Activated CD4-positive, alpha-beta T cell treated with anti-CD3 and anti-CD28 coated beads for 36 hours (primary cell): ENCODE measurements at regions of chr11 and their contacts with region 1.

Region 1: GRCh38 chr11:68053981-68054812 is 15.4 kb downstream of the TCIRG1 start:
- DNase-seq: no peak
- ATAC-seq: no peak
- H3K4me3 Mint-ChIP-seq: no peak overlapping the region
- H3K27ac Mint-ChIP-seq: peak overlapping the region; percentile 55
- H3K4me1 Mint-ChIP-seq: peaks cover 2% of the 10 kb centered on the region
- H3K27me3 Mint-ChIP-seq: no peaks in the 10 kb centered on the region

Region 2: GRCh38 chr11:68021167-68021787 is 32.9 kb before region 1 on chr11:
- CTCF ChIA-PET with region 1: no interaction called
- POLR2A ChIA-PET with region 1: no interaction called
- intact Hi-C with region 1: no loop called
- DNase-seq: no peak
- ATAC-seq: no peak
- H3K4me3 Mint-ChIP-seq: no peak overlapping the region
- H3K27ac Mint-ChIP-seq: no peak overlapping the region
- H3K4me1 Mint-ChIP-seq: no peaks in the 10 kb centered on the region
- H3K27me3 Mint-ChIP-seq: no peaks in the 10 kb centered on the region

Region 3: DNA sequence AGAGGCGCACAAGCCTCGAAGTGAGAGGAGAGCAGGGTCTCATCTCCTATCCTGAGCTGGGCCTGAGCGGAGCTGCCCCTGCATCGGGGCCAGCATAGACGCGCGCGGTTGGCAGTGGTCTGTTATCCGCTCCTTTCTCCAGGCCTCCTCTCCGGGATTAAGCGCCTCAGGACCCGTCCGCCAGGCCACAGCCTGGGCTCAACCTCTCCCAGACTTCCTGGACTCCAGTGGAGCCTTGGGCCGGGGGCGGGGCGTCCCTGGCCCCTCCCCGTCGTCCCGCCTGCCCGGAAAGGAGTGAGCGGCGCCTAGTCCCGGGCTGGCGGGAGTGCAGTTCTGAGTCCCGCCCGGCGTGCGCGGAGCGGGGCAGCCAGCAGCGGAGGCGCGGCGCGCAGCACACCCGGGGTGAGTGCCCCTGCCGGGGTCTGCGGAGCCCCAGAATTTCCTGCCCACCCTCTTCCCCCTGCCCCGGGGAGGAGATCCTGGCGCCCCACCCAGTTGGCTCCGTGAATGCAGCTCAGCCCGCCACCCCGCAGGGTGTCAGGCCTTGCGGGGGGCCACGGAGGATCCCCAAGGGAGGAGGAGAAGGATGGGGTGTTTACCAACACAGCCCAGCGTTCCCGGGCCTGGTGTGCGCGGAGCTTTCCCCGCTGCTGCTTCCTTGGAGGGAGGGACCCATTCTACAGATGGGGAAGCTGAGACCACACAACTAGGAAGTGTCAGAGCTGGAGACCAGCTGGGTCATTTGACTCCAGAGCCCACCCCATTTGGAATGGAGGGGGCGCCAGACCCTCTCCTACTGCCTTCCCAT is 15.3 kb before region 1 on chr11 and contains the start of gene TCIRG1:
- CTCF ChIA-PET with region 1: no interaction called
- POLR2A ChIA-PET with region 1: interaction called, 3 read pairs
- intact Hi-C with region 1: loop called in 1 of 2 experiments (anchors 2 kb)
- DNase-seq: peak; percentile 82
- ATAC-seq: peak; percentile 76
- H3K4me3 Mint-ChIP-seq: peak within 1 kb of the TSS; percentile 88
- H3K27ac Mint-ChIP-seq: peak within 1 kb of the TSS; percentile 90
- H3K4me1 Mint-ChIP-seq: peaks cover 18% of the 10 kb centered on the region
- H3K27me3 Mint-ChIP-seq: no peaks in the 10 kb centered on the region
- total RNA-seq, gene TCIRG1: 117 to 151 TPM

Region 4: DNA sequence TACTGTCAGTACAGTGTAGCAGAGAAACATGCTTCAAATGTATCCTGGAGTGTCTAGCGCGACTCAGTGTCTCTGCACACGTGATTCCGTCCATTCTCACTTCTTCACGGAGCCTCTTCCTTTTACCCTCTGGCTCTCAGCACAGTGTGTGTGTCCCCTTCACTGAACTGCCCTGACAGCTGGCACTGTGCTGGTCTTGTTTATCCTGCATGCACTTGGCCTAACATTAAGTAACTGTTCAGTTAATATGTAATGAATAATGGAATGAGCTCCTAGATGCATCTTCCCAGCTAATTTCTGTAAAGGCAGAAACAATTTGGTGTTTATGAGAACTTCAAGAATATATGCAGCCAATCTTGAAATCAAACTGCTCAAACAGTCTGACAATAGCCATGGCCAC is 114.5 kb after region 1 on chr11:
- CTCF ChIA-PET with region 1: no interaction called
- POLR2A ChIA-PET with region 1: no interaction called
- intact Hi-C with region 1: no loop called
- DNase-seq: no peak
- ATAC-seq: no peak
- H3K4me3 Mint-ChIP-seq: no peak overlapping the region
- H3K27ac Mint-ChIP-seq: no peak overlapping the region
- H3K4me1 Mint-ChIP-seq: no peaks in the 10 kb centered on the region
- H3K27me3 Mint-ChIP-seq: no peaks in the 10 kb centered on the region